Right ventricle myocardium superior (tissue), 1 donor: ENCODE measurements at regions of chr2 and their contacts with region 1.

Region 1: GRCh38 chr2:61993444-61994024 is 88.1 kb downstream of the COMMD1 start:
- DNase-seq: no peak
- ATAC-seq: peak; percentile 83

Region 2: DNA sequence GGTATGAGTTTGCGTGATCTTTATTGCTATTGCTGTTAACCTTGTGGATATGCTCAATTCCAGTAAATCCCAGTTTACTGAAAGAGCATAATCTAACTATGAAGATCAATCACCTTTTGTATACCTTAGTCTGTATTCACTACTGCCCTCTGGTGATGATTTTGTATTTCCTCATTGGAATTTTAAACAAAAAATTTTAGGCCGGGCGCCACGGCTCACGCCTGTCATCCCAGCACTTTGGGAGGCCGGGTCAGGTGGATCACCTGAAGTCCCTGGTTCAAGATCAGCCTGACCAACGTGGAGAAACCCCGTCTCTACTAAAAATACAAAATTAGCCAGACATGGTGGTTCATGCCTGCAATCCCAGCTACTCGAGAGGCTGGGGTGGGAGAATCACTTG is 82.9 kb before region 1 on chr2:
- intact Hi-C with region 1: loop called (anchors 5 kb)
- DNase-seq: no peak
- ATAC-seq: no peak

Region 3: DNA sequence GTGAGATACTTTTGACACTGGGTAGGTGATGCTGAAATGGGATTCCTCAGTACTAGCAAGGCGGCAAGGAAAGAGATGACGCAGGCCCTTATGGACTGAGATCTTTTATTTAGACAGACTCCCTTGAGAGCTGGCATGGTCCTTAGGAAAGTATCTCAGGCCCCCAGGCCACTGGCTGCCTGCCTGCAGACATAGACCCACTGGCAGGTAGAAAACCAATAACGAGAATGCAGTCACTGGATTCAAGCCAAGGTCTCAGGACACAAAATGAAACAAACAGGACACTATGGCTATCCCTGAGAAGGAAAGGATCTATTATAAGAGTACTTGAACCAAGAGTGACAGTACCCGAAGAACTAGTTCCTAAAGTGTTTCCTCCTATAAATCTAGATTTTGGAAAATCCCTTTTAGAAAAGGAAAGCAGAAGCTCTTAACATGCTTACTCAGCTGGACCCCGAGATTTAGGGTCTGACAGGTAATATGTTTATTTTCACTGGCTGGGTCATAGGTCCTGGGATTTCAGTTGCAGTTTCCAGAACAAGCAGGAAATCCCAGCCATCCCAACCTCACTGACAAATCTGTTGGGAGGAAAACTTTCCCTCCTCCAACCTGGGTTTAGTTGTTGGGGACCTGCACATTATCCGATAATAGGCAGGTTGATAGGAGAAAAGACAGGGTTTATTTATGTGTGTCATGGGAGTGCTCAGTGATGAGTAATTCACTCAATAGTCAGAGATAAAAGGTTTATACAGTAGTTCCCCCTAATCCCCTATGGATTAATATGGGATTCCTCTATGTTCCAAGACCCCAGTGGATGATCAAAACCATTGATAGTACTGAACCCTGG is 43.6 kb before region 1 on chr2:
- intact Hi-C with region 1: no loop called
- DNase-seq: no peak
- ATAC-seq: peak; percentile 52

Region 4: DNA sequence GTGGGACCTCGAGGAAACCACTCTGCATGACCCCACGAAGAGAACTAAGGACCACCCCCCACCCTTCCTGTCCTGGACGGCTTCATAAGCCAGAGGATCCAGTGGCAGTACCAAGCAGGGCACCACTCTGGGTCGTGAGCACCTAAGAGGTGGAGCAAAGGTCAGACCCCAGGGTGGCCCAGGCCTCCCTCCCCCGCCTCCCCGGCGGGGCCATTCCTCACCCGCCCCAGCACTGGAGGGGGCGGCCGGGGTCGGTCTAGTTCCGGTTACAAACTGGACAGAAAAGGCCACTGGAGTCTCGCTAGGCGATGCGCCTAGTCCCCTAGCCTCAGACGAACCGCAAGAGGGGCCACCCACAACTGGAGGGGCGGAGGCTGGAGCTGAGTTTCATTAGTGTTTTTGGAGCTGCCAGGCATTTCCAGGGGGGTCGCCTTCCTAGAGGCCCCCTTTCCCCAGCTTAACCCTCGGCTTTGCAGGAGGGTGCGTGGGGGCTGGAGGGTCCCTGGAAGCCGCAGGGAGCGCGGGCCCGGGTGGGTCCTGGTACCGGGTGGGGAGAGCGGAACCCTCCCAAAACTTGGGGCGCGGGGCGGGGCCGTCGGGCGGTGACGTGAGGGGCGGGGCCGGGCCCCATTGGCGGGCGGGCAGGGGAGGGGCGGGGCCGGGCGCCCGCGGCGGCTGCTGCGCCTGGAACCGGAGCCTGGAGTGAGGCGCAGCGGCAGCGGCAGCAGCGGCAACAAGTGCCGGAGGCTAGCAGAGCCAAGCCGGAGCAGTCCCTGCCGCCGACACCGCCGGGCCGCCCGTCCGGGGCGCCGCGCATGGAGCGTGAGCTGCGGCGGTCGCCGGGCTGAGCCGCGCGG is 202.1 kb after region 1 on chr2 and contains the start of gene B3GNT2:
- intact Hi-C with region 1: loop called (anchors 10 kb)
- DNase-seq: peak; percentile 90
- ATAC-seq: peak; percentile 94
- total RNA-seq, gene B3GNT2: 14.6 TPM